Heart left ventricle (tissue), 16 donors: ENCODE measurements at regions of chr12 and their contacts with region 1.

Region 1: DNA sequence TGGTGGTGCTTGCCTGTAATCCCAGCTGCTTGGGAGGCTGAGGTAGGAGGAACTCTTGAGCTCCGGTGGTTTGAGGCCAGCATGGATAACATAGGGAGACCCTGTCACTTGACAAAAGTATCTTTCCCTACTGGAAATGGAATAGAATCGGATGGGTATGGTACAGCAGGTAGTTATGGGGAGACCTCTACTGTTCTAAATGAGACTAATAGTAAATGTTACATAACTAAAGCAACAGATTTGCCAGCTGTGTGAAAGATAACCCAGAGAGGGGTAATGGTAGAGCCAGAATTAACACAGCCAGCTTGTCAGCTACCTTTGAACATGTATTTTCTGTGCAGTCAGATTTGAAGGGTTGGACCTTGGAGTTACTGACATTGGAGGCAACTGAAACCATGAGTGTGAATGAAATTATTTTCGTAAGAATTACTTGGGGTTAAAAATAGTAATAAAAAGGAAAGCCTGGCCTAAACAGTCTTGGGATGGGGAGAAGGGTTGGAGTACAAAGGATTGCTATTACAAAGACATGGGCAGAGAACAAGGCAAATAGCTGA is 21.7 kb upstream of the NUP107 start:
- DNase-seq: no peak
- ATAC-seq: peak; percentile 71 to 92 (median 78)
- H3K4me3 ChIP-seq: no peak overlapping the region
- H3K27ac ChIP-seq: peak overlapping the region in 1 of 12 donors; percentile 44
- H3K4me1 ChIP-seq: peaks cover 0 to 7% (median 2%) of the 10 kb centered on the region in 12 donors
- H3K27me3 ChIP-seq: no peaks in the 10 kb centered on the region
- CTCF ChIP-seq: peak in 7 of 12 donors; percentile 7 to 46 (median 24)
- POLR2A ChIP-seq: no peak

Region 2: DNA sequence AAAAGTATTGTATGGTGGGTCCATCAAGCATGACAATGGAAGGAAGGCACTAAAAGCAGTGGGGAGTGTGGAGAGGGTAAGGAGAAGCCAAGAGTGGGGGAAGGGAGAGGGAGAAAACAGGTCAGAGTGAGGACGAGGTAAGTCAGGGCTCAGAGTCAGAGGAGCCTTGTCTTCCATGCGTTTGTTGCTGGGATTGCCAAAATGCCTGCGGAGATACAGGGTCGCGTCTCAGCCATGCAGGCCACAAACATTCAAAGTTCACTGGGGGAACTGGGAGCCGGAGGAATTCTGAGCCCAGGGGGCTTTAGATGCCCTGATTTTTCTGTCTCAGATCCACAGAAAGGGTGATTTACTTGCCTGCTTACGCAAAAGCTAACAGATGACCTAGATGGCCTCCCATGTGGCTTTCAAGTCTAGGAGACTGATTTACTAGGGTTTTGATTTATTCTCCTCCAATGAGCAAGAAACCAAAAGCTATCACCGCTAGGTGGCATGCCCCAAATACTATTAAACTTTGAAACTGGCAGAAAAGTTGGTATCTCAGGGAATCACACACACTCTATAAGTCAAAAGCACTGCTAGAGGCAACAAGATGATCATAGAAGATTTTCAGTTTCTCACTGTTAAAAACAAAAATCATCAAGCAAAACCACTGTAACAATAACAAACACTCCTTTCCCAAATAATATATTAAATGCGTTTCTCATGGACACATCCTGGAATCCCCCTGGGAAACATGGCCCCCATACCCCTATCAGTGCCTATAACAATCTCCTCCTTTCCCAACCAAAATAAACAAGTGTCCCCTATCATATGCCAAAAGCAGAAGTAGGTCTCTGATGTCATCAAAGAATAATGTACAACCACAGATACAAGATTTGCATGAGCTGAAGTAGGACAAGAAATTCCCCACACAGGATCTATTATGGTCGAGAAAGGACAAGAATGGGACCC is 306.3 kb before region 1 on chr12:
- intact Hi-C with region 1: loop called in 6 of 10 experiments (anchors 5 to 10 kb)
- DNase-seq: peak in 3 of 5 donors; percentile 46 to 64 (median 58)
- ATAC-seq: peak; percentile 57 to 94 (median 80)
- H3K4me3 ChIP-seq: no peak overlapping the region
- H3K27ac ChIP-seq: peak overlapping the region in 4 of 12 donors; percentile 20 to 50 (median 44)
- H3K4me1 ChIP-seq: peaks cover 0 to 20% (median 6%) of the 10 kb centered on the region in 12 donors
- H3K27me3 ChIP-seq: no peaks in the 10 kb centered on the region
- CTCF ChIP-seq: peak; percentile 54 to 82 (median 70)
- POLR2A ChIP-seq: no peak

Region 3: DNA sequence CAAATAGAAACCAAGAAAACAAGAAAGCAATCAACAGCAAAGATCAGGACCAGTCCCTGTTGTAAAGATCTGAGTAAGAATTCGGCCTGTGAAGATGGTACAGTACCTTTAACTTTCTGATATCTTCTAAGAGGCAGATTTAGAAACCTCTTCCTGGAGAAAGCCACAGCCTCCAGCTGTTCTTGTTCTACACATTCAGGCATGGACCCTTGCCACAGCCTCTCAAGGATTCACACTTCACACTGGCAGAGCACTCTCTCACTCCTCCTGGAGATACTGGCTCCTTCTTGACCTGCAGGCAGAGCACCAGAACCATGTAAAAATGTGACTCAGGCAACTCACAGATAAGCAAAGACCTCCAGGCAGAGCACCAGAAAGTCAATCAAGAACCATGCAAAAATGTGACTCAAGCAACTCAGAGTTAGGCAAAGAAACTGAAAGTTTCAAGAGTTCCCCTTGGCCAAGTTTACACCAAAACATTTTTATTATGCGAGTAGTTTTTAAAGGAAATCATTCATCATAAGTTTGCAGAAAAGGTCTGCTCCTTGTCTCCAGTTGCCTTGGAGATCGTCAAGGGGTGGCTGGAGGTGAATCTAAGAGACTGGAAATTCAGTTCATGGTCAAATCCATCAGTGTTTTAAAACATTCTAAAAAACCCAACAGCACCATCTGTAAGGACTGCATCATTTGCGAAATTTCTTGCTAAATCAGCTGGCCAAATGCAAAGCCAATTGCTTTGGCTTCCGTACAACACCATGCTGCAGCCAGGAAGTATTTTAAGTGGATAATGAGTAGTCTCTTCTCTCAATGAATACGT is 213.6 kb before region 1 on chr12:
- intact Hi-C with region 1: no loop called
- DNase-seq: peak in 4 of 5 donors; percentile 16 to 47 (median 26)
- ATAC-seq: peak in 3 of 4 donors; percentile 35 to 69 (median 63)
- H3K4me3 ChIP-seq: peak overlapping the region in 6 of 12 donors; percentile 1 to 32 (median 18)
- H3K27ac ChIP-seq: peak overlapping the region in 7 of 12 donors; percentile 15 to 68 (median 52)
- H3K4me1 ChIP-seq: peaks cover 0 to 68% (median 43%) of the 10 kb centered on the region in 12 donors
- H3K27me3 ChIP-seq: no peaks in the 10 kb centered on the region
- CTCF ChIP-seq: no peak
- POLR2A ChIP-seq: no peak